Activated naive CD4-positive, alpha-beta T cell treated with anti-CD3 and anti-CD28 coated beads for 36 hours (primary cell): ENCODE measurements at regions of chr6 and their contacts with region 1.

Region 1: DNA sequence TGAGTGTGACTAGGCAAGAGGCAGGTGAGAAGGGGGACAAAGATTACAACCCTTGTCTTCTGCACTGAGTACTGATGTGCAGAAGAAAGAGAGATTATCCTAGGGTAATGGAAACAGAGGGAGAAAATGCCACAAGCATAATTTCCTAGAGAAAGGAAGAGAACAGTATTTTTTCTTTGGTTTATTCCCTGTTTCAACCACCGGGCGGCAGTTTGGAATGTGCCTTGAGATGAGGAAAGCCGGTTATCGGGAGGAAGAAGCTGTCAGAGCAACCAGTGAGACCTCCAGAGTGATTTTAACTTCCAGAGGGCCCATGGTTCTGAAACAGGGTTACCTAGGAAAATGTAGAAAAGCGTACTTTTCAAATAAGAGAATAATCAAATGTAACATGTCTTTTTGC is 121.4 kb downstream of the REV3L start:
- DNase-seq: peak; percentile 7
- H3K4me3 Mint-ChIP-seq: no peak overlapping the region
- H3K27ac Mint-ChIP-seq: no peak overlapping the region
- H3K4me1 Mint-ChIP-seq: no peaks in the 10 kb centered on the region
- H3K27me3 Mint-ChIP-seq: no peaks in the 10 kb centered on the region

Region 2: GRCh38 chr6:111276338-111277119 is 85.1 kb before region 1 on chr6:
- CTCF ChIA-PET with region 1: no interaction called
- intact Hi-C with region 1: no loop called
- DNase-seq: no peak
- H3K4me3 Mint-ChIP-seq: no peak overlapping the region
- H3K27ac Mint-ChIP-seq: no peak overlapping the region
- H3K4me1 Mint-ChIP-seq: peaks cover 2% of the 10 kb centered on the region
- H3K27me3 Mint-ChIP-seq: no peaks in the 10 kb centered on the region

Region 3: DNA sequence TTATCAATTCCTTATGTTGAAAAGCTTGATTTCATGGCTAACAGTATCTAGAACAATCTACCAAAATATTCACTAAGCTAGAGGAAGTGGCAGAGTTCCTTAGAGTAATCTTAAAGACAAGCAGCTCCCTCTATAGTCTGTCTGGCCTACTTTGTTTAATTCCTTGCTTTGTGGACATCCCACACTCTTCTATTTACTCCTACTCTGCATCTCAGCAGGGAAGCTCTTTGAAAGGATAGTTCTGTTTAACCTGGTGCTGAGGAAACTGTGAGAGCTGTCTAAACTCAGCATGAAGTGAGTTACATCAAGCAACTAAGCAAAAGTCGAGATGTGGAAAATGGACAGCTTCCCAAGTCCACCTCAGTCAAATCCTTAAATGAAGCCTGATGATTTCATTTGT is 117.1 kb after region 1 on chr6:
- CTCF ChIA-PET with region 1: interaction called, 7 read pairs
- intact Hi-C with region 1: loop called (anchors 1 kb)
- DNase-seq: no peak
- H3K4me3 Mint-ChIP-seq: no peak overlapping the region
- H3K27ac Mint-ChIP-seq: no peak overlapping the region
- H3K4me1 Mint-ChIP-seq: peaks cover 31% of the 10 kb centered on the region
- H3K27me3 Mint-ChIP-seq: no peaks in the 10 kb centered on the region